K562 (cell line): ENCODE measurements at regions of chr7 and their contacts with region 1.

Region 1: GRCh38 chr7:38186593-38187314 is 8.7 kb downstream of the STARD3NL start:
- DNase-seq: no peak
- ATAC-seq: no peak
- H3K4me3 ChIP-seq: no peak overlapping the region
- H3K27ac ChIP-seq: no peak overlapping the region
- H3K4me1 ChIP-seq: peaks cover 0 to 24% of the 10 kb centered on the region in 2 experiments; a peak in 4 of 5 replicates
- H3K27me3 ChIP-seq: no peaks in the 10 kb centered on the region
- CTCF ChIP-seq: no peak
- EP300 ChIP-seq: no peak
- POLR2A ChIP-seq: no peak
- RAD21 ChIP-seq: no peak

Region 2: GRCh38 chr7:38198366-38198765 is 11.6 kb after region 1 on chr7:
- CTCF ChIA-PET with region 1: no interaction called
- POLR2A ChIA-PET with region 1: interaction called, 15 read pairs
- in situ Hi-C with region 1: no loop called
- intact Hi-C with region 1: no loop called
- DNase-seq: no peak
- ATAC-seq: no peak; the same call in 2 of the 3 replicates
- H3K4me3 ChIP-seq: no peak overlapping the region
- H3K27ac ChIP-seq: no peak overlapping the region
- H3K4me1 ChIP-seq: no peaks in the 10 kb centered on the region
- H3K27me3 ChIP-seq: no peaks in the 10 kb centered on the region
- CTCF ChIP-seq: no peak
- EP300 ChIP-seq: no peak
- POLR2A ChIP-seq: no peak
- RAD21 ChIP-seq: no peak

Region 3: DNA sequence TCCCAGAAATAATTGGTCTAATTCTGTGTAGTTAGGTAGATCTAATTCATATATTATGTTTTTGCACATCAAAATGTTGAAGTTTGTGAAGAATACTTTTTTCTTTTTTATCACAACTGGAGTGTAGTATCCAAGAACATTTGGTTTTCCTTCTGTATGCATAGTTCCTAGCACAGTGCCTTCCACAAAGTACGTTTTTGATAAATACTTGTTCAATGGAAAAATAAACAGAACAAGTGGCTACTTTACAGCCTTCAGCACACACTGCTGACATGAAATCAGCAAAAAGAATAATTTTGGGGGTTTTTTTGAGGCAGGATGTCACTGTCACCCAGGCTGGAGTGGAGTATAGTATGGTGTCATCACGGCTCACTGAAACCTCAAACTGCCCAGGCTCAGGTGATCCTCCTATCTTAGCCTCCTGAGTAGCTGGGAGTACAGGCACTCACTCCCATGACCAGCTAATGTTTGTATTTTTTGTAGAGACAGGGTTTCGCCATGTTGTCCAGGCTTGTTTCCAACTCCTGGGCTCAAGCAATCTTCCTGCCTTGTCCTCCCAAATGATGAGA is 58.7 kb after region 1 on chr7:
- CTCF ChIA-PET with region 1: no interaction called
- POLR2A ChIA-PET with region 1: no interaction called
- in situ Hi-C with region 1: no loop called
- intact Hi-C with region 1: no loop called
- DNase-seq: no peak
- ATAC-seq: peak; percentile 62
- H3K4me3 ChIP-seq: no peak overlapping the region
- H3K27ac ChIP-seq: peak overlapping the region; percentile 25; the same call in 1 of the 3 replicates
- H3K4me1 ChIP-seq: no peaks in the 10 kb centered on the region
- H3K27me3 ChIP-seq: peaks cover 3 to 7% of the 10 kb centered on the region in 2 experiments; a peak in 3 of 5 replicates
- CTCF ChIP-seq: no peak
- EP300 ChIP-seq: no peak
- POLR2A ChIP-seq: no peak
- RAD21 ChIP-seq: no peak

Region 4: GRCh38 chr7:38524786-38525185 is 338.0 kb after region 1 on chr7:
- CTCF ChIA-PET with region 1: no interaction called
- POLR2A ChIA-PET with region 1: no interaction called
- in situ Hi-C with region 1: no loop called
- intact Hi-C with region 1: no loop called
- DNase-seq: no peak
- ATAC-seq: no peak
- H3K4me3 ChIP-seq: no peak overlapping the region
- H3K27ac ChIP-seq: no peak overlapping the region
- H3K4me1 ChIP-seq: no peaks in the 10 kb centered on the region
- H3K27me3 ChIP-seq: no peaks in the 10 kb centered on the region
- CTCF ChIP-seq: no peak
- EP300 ChIP-seq: no peak
- POLR2A ChIP-seq: no peak
- RAD21 ChIP-seq: no peak